Activated T-helper 2 cell treated with anti-CD3 and anti-CD28 coated beads, Interferon-gamma antibody, Interleukin-2, Interleukin-4, amounts not matched to agents 10 μg/mL and 5 μg/mL and 100 μg/mL, durations not matched to agents 14 hours and 24 hours and 36 hours (primary cell): ENCODE measurements at regions of chr12 and their contacts with region 1.

Region 1: GRCh38 chr12:100234598-100235304 is 32.1 kb downstream of the DEPDC4 start:
- DNase-seq: no peak
- H3K4me3 Mint-ChIP-seq: no peak overlapping the region
- H3K27ac Mint-ChIP-seq: no peak overlapping the region
- H3K4me1 Mint-ChIP-seq: no peaks in the 10 kb centered on the region
- H3K27me3 Mint-ChIP-seq: no peaks in the 10 kb centered on the region

Region 2: DNA sequence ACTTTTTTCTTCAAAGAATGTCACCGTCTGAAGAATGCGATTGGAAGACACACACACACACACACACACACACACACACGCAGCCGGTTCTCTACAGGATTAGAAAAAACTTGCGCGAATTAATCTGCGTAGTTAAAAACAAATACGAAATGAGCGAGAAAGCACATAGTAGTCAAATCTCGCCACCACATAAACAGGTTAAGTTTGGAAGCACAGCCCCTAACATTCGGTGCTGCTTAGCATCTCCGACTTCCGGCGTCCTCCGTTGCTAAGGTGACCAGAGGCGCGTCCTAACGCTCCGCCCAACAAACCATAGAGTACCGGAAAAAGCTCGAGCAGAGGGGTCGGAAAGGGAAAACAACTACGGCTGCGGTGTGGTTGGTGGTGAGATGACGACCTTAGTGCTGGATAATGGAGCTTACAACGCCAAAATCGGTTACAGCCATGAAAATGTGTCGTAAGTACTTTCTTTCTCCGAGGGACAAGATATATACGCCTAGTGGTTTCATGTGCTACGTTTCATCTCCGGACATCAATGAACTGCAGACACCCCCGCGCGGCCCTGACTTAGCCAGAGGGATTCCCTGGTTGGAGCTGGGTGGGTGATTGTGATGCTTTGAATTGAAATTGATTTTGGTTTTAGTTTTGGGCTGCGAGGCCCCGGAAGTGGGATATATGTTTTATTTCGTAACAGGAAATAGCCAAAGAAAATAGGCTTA is 34.1 kb before region 1 on chr12 and contains the start of gene ACTR6:
- intact Hi-C with region 1: no loop called
- DNase-seq: peak; percentile 95
- H3K4me3 Mint-ChIP-seq: peak within 1 kb of the TSS; percentile 98
- H3K27ac Mint-ChIP-seq: peak within 1 kb of the TSS; percentile 100
- H3K4me1 Mint-ChIP-seq: peaks cover 20% of the 10 kb centered on the region
- H3K27me3 Mint-ChIP-seq: no peaks in the 10 kb centered on the region
- total RNA-seq, gene ACTR6: 40.4 and 42.1 TPM in 2 replicates

Region 3: GRCh38 chr12:100215209-100215608 is 19.5 kb before region 1 on chr12:
- intact Hi-C with region 1: no loop called
- DNase-seq: no peak
- H3K4me3 Mint-ChIP-seq: no peak overlapping the region
- H3K27ac Mint-ChIP-seq: no peak overlapping the region
- H3K4me1 Mint-ChIP-seq: peaks cover 2% of the 10 kb centered on the region
- H3K27me3 Mint-ChIP-seq: no peaks in the 10 kb centered on the region

Region 4: GRCh38 chr12:100404769-100405407 is 170.1 kb after region 1 on chr12:
- intact Hi-C with region 1: loop called (anchors 2 kb)
- DNase-seq: peak; percentile 9
- H3K4me3 Mint-ChIP-seq: no peak overlapping the region
- H3K27ac Mint-ChIP-seq: no peak overlapping the region
- H3K4me1 Mint-ChIP-seq: no peaks in the 10 kb centered on the region
- H3K27me3 Mint-ChIP-seq: peaks cover 4% of the 10 kb centered on the region

Region 5: DNA sequence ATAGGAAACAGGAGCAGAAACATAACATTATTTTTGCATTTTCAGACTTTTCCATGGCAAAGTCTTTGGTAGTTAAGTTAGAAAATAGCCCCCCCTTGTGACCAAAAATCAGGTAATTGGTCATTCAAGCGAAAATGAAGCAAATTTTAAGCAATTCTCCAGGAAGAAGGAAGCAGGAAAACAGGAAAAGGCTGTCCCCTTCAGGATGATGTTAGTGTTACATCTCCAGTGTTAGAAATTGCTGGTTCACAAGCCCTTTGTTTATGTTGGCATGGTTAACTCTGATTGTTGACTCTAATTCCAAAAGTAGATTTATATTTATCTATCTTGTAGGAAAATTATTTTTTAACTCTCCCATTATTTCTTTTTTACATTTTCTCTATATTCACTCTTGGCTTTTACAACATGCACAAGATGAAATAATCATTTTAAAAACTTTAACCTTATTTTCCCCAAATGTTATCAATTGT is 319.9 kb after region 1 on chr12:
- intact Hi-C with region 1: loop called (anchors 2 kb)
- DNase-seq: no peak
- H3K4me3 Mint-ChIP-seq: no peak overlapping the region
- H3K27ac Mint-ChIP-seq: no peak overlapping the region
- H3K4me1 Mint-ChIP-seq: no peaks in the 10 kb centered on the region
- H3K27me3 Mint-ChIP-seq: no peaks in the 10 kb centered on the region

Region 6: DNA sequence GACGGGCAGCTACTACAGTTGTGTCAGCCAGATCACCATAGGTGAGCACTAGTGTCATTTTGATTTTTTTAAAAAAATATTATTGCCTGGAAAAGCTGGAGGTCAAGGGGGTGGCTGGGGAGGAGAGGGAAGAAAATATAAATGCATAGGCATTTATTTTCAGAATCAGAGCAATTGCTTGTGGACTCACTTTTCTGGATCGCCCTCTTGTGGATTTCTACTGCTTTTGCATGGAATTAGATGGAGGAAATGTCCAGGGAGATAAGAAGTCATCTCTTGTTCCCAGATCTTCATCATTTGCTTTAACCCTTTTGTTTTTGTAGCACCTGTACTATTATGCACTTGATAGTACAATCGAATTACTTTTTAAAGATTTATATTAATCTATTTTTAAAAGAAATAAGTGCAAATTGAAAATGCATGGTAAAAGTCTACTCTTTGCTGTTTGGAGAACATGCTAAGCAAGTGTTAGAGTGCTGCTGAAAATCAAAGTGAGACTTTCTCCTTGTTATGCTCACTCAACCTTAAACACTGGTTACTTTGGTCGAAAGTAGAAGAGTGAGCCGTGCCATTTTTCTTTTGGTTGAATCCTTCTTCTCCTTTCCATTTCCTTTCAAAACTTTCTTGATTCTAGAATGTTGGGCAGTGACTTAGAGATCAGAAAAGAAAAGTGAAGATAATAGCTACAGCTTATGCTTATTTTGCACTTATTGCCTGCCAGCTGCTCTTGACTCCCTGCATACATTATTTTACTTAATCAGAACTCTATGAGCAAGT is 499.3 kb after region 1 on chr12:
- intact Hi-C with region 1: loop called (anchors 10 kb)
- DNase-seq: no peak
- H3K4me3 Mint-ChIP-seq: no peak overlapping the region
- H3K27ac Mint-ChIP-seq: no peak overlapping the region
- H3K4me1 Mint-ChIP-seq: no peaks in the 10 kb centered on the region
- H3K27me3 Mint-ChIP-seq: no peaks in the 10 kb centered on the region